AG04449 (cell line): ENCODE measurements at regions of chr1 and their contacts with region 1.

Region 1: DNA sequence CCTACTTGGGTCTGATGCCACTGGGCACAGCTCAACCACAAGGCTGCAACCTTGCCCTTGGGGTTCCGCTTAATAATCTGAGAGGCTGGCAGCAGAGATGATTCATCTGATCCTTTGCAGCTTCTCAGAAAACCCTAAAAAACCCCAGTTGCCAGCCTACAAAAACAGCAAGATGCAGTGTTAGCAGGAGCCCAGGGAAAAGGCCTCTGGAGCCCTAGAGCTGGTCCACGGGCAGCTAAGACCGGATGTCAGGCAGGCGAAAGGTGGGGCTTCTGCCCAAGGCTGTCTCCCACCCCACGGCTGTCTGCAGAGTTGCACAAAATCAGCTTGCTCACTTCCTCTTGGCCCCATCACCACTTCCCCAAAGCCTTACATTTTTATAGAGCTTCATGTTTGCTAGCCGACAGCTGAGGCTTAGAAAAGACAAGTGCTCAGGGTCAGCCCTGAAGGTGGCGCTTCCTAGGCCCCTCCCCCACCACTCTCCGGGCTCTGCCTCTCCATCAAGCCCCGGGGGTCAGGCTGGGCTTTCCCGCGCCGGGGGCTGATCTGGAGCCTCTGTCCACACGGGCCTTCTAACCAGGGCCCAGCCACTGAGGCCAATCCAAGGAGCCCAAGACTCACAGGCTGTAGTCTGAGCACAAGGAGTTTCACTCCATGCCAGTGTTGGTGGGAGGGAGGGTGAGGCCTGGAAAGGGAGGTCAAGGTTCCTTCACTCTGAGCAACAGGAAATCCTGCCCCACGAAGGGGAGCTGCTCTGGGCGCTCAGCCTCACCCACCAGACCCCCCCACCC is 4.2 kb upstream of the ADORA3 start:
- DNase-seq: no peak
- H3K4me3 ChIP-seq: peak overlapping the region; percentile 36
- CTCF ChIP-seq: peak; percentile 45

Region 2: GRCh38 chr1:111497592-111497991 is 10.0 kb before region 1 on chr1:
- CTCF ChIA-PET with region 1: interaction called, 72 read pairs
- POLR2A ChIA-PET with region 1: interaction called, 3 read pairs
- DNase-seq: no peak
- H3K4me3 ChIP-seq: no peak overlapping the region
- CTCF ChIP-seq: no peak

Region 3: DNA sequence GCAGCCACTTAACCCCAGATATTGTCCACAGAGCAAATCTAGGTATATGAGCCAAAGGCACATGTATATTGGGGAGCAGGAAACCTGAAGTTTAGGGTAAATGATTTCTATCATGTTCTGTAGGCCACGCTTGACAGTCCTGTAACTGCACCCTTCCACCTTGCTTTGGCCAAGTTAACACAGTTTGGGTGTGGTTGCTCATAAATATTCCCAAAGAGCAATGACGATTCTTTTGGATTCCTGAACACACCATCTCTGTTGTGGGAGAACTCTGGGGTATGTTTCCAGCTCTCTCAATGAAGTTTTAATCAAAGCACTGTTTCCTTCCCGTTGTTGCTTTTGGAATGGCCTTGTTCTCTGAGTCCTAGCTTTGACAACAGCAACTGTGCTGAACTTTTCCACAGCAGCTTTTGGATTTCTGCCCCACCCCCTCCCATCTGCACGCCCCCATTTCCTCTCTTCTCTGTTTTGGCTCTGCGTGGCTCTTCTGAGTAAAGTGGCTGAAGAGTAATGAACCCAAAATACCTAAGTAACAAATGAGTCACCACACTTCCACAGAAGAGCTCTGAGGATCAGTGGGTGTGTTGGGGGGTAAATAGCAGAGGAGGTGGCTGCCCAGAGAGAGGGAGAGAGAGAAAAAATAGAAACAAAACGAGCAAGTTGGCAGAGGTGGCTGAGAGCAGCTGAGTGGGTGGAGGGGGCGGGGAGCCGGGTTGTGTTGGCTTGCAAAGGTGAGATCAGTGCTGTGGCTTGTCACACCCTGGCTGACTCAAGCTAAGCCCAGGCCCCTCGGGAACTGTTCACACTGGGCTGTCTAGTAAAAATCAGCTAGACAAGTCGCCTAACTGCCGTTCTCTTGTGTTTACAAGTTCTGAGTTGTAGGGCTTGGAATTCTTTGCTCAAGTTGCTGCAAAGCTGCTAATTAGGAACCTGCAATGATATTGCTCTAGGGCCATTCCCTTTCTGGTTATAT is 85.1 kb after region 1 on chr1:
- CTCF ChIA-PET with region 1: interaction called, 21 read pairs
- POLR2A ChIA-PET with region 1: interaction called, 6 read pairs
- DNase-seq: no peak
- H3K4me3 ChIP-seq: peak overlapping the region; percentile 31
- CTCF ChIP-seq: no peak

Region 4: GRCh38 chr1:111648806-111649205 is 141.2 kb after region 1 on chr1:
- CTCF ChIA-PET with region 1: interaction called, 43 read pairs
- POLR2A ChIA-PET with region 1: no interaction called
- DNase-seq: no peak
- H3K4me3 ChIP-seq: no peak overlapping the region
- CTCF ChIP-seq: no peak

Region 5: DNA sequence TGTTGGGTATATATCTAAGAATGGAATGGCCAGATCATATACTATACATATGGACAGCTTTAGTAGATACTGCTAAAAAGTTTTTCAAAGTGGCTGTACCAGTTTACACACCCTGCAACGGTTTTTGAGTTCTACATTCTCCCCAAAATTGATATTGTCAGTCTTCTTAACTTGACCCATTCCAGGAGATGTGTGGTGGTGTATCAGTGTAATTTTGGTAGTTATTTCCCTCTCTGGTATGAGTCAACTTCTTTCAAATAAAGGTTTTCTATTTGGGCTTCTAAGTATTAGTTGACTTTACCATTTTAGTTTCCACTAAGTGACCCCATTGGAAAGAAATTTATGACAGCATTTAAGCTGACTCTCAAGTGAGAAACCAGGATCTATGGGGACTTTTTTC is 202.4 kb after region 1 on chr1:
- CTCF ChIA-PET with region 1: interaction called, 48 read pairs
- POLR2A ChIA-PET with region 1: interaction called, 4 read pairs
- DNase-seq: no peak
- H3K4me3 ChIP-seq: no peak overlapping the region
- CTCF ChIP-seq: no peak

Region 6: DNA sequence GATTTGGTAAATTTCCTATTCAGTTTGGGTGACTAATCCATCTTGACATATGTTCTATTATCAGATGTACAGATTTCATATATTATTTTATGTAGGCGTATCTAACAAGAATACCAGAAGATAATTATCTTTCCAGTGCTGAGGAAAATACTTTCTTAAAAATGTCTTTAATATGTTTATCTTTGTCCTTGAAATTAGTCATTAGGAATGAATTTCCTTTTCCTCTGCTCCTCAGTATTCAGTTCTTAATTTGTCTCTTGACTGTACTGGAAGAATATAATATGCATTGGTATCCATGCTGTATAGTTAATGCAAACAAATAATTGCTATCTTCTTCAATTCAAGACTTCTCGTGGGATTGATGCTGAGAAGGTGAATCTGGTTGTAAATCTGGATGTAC is 254.7 kb after region 1 on chr1:
- CTCF ChIA-PET with region 1: interaction called, 78 read pairs
- POLR2A ChIA-PET with region 1: no interaction called
- DNase-seq: no peak
- H3K4me3 ChIP-seq: no peak overlapping the region
- CTCF ChIP-seq: no peak